GM13976 (cell line): ENCODE measurements at regions of chr1 and their contacts with region 1.

Region 1: GRCh38 chr1:211698161-211699026 is 23.0 kb upstream of the NEK2 start:
- DNase-seq: peak; percentile 87
- CTCF ChIP-seq: peak; percentile 99

Region 2: GRCh38 chr1:211548321-211549091 is 149.9 kb before region 1 on chr1:
- in situ Hi-C with region 1: no loop called
- DNase-seq: no peak
- CTCF ChIP-seq: no peak

Region 3: GRCh38 chr1:212035123-212035834 is 336.9 kb after region 1 on chr1 and contains the starts of genes DTL and INTS7:
- in situ Hi-C with region 1: loop called (anchors 10 kb)
- DNase-seq: peak; percentile 96
- CTCF ChIP-seq: peak; percentile 86